SK-N-SH (cell line): ENCODE measurements at regions of chr17 and their contacts with region 1.

Region 1: GRCh38 chr17:66727639-66728570 is 107.0 kb upstream of the CACNG5 start:
- DNase-seq: peak; percentile 87
- H3K4me3 ChIP-seq: no peak overlapping the region; a peak in 1 of 4 replicates
- H3K27ac ChIP-seq: peak overlapping the region in 1 of 2 experiments; percentile 36; a peak in 2 of 4 replicates
- H3K4me1 ChIP-seq: peaks cover 9 to 25% of the 10 kb centered on the region in 2 experiments; a peak in 1 of 4 replicates
- H3K27me3 ChIP-seq: no peaks in the 10 kb centered on the region
- CTCF ChIP-seq: peak; percentile 70
- EP300 ChIP-seq: no peak
- RAD21 ChIP-seq: peak; percentile 93

Region 2: GRCh38 chr17:66397486-66397885 is 330.4 kb before region 1 on chr17:
- CTCF ChIA-PET with region 1: no interaction called
- POLR2A ChIA-PET with region 1: no interaction called
- DNase-seq: no peak
- H3K4me3 ChIP-seq: no peak overlapping the region
- H3K27ac ChIP-seq: peak overlapping the region in 1 of 2 experiments; percentile 98; a peak in 2 of 4 replicates
- H3K4me1 ChIP-seq: peaks cover 0 to 33% of the 10 kb centered on the region in 2 experiments; a peak in 2 of 4 replicates
- H3K27me3 ChIP-seq: no peaks in the 10 kb centered on the region
- CTCF ChIP-seq: no peak
- EP300 ChIP-seq: no peak
- RAD21 ChIP-seq: no peak

Region 3: GRCh38 chr17:66633317-66633965 is 94.5 kb before region 1 on chr17:
- CTCF ChIA-PET with region 1: no interaction called
- POLR2A ChIA-PET with region 1: no interaction called
- DNase-seq: no peak
- H3K4me3 ChIP-seq: no peak overlapping the region
- H3K27ac ChIP-seq: no peak overlapping the region
- H3K4me1 ChIP-seq: peaks cover 6 to 11% of the 10 kb centered on the region in 2 experiments
- H3K27me3 ChIP-seq: no peaks in the 10 kb centered on the region
- CTCF ChIP-seq: no peak
- EP300 ChIP-seq: no peak
- RAD21 ChIP-seq: no peak

Region 4: GRCh38 chr17:66704858-66705520 is 22.9 kb before region 1 on chr17:
- CTCF ChIA-PET with region 1: interaction called, 17 read pairs
- POLR2A ChIA-PET with region 1: interaction called, 3 read pairs
- DNase-seq: no peak
- H3K4me3 ChIP-seq: no peak overlapping the region
- H3K27ac ChIP-seq: peak overlapping the region in 1 of 2 experiments; percentile 68; a peak in 2 of 4 replicates
- H3K4me1 ChIP-seq: peaks cover 0 to 20% of the 10 kb centered on the region in 2 experiments; a peak in 2 of 4 replicates
- H3K27me3 ChIP-seq: no peaks in the 10 kb centered on the region
- CTCF ChIP-seq: no peak
- EP300 ChIP-seq: no peak
- RAD21 ChIP-seq: no peak

Region 5: GRCh38 chr17:66764559-66764958 is 36.7 kb after region 1 on chr17:
- CTCF ChIA-PET with region 1: interaction called, 11 read pairs
- POLR2A ChIA-PET with region 1: no interaction called
- DNase-seq: no peak
- H3K4me3 ChIP-seq: no peak overlapping the region
- H3K27ac ChIP-seq: peak overlapping the region in 1 of 2 experiments; percentile 53; a peak in 2 of 4 replicates
- H3K4me1 ChIP-seq: peaks cover 0 to 14% of the 10 kb centered on the region in 2 experiments; a peak in 2 of 4 replicates
- H3K27me3 ChIP-seq: no peaks in the 10 kb centered on the region
- CTCF ChIP-seq: no peak
- EP300 ChIP-seq: 0 out of 4 replicates have a peak, but pooled peaks of 1 of the 2 experiments have one; percentile 14
- RAD21 ChIP-seq: no peak

Region 6: GRCh38 chr17:66841328-66841727 is 113.4 kb after region 1 on chr17:
- CTCF ChIA-PET with region 1: interaction called, 20 read pairs
- POLR2A ChIA-PET with region 1: no interaction called
- DNase-seq: no peak
- H3K4me3 ChIP-seq: no peak overlapping the region
- H3K27ac ChIP-seq: no peak overlapping the region
- H3K4me1 ChIP-seq: no peaks in the 10 kb centered on the region; a peak in 1 of 4 replicates
- H3K27me3 ChIP-seq: peaks cover 31% of the 10 kb centered on the region
- CTCF ChIP-seq: no peak
- EP300 ChIP-seq: no peak
- RAD21 ChIP-seq: no peak

Region 7: GRCh38 chr17:66892037-66892645 is 164.2 kb after region 1 on chr17:
- CTCF ChIA-PET with region 1: interaction called, 460 read pairs
- POLR2A ChIA-PET with region 1: no interaction called
- DNase-seq: no peak
- H3K4me3 ChIP-seq: no peak overlapping the region
- H3K27ac ChIP-seq: no peak overlapping the region
- H3K4me1 ChIP-seq: no peaks in the 10 kb centered on the region; a peak in 1 of 4 replicates
- H3K27me3 ChIP-seq: peaks cover 23% of the 10 kb centered on the region; the same call in 1 of the 2 replicates
- CTCF ChIP-seq: no peak
- EP300 ChIP-seq: no peak
- RAD21 ChIP-seq: no peak

Region 8: DNA sequence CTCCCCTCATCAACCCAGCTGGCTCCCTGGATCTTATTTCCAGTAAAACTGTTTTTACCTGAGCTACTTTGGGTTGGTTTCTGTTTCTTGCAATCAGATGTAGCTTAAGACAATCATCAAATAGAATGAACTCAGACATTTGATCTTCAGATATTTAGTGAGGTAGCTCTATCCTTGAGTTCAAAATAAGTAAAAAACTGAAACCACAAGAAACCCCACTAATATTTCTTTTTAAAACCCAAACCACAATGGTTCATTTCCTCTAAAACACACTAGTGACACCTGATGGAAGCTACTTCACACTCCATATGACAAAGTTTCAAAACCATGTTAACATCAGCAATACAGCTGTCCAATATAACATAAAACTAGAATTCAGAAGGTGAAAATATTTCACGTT is 354.2 kb after region 1 on chr17:
- CTCF ChIA-PET with region 1: interaction called, 18 read pairs
- POLR2A ChIA-PET with region 1: no interaction called
- DNase-seq: no peak
- H3K4me3 ChIP-seq: no peak overlapping the region
- H3K27ac ChIP-seq: peak overlapping the region in 1 of 2 experiments; percentile 36; a peak in 1 of 4 replicates
- H3K4me1 ChIP-seq: peaks cover 0 to 10% of the 10 kb centered on the region in 2 experiments; a peak in 2 of 4 replicates
- H3K27me3 ChIP-seq: no peaks in the 10 kb centered on the region
- CTCF ChIP-seq: no peak
- EP300 ChIP-seq: no peak
- RAD21 ChIP-seq: peak; percentile 68